Left ventricle myocardium inferior (tissue), 1 donor: ENCODE measurements at regions of chr6 and their contacts with region 1.

Region 1: DNA sequence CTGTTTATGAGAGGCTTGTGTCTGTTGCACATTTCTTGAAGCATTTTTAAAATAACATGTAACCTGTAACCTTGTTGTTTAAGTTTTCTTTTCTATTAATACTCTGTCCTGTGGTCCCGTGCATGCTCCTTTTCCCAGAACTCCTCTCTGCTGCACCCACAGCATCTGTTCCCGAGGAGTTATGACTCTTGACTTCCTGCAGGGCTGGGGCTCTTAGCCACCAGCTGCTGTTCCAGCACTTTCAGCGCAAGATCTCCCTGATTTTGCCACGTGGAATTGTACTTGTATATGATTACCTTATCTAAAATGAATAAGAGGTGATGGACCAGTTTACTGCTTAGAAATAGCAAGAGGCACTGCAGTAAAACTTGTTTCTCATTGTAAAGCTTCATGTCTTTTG is 150.6 kb downstream of the QKI start:
- DNase-seq: no peak
- H3K4me3 ChIP-seq: no peak overlapping the region
- H3K27ac ChIP-seq: peak overlapping the region; percentile 50
- H3K4me1 ChIP-seq: peaks cover 76% of the 10 kb centered on the region
- H3K27me3 ChIP-seq: no peaks in the 10 kb centered on the region
- CTCF ChIP-seq: no peak

Region 2: GRCh38 chr6:163474581-163474980 is 90.6 kb before region 1 on chr6:
- intact Hi-C with region 1: no loop called
- DNase-seq: no peak
- H3K4me3 ChIP-seq: no peak overlapping the region
- H3K27ac ChIP-seq: peak overlapping the region; percentile 6
- H3K4me1 ChIP-seq: peaks cover 90% of the 10 kb centered on the region
- H3K27me3 ChIP-seq: no peaks in the 10 kb centered on the region
- CTCF ChIP-seq: no peak

Region 3: DNA sequence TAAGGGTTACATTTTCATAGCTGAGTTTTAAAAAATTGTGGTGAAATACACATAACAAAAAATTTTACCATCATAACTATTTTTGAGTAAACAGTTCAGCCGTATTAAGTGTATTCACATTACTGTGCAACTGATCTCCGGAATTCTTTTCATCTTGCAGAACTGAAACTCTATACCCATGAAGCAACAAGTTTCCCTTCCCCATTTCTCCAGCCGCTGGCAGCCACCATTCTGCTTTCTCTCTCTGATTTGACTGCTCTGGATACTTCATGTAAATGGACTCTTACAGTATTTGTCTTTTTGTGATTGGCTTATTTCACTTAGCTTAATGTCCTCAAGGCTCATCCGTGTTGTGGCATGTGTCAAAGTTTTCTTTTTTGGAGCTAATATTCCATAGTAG is 190.9 kb after region 1 on chr6:
- intact Hi-C with region 1: no loop called
- DNase-seq: no peak
- H3K4me3 ChIP-seq: no peak overlapping the region
- H3K27ac ChIP-seq: no peak overlapping the region
- H3K4me1 ChIP-seq: peaks cover under 1% of the 10 kb centered on the region
- H3K27me3 ChIP-seq: no peaks in the 10 kb centered on the region
- CTCF ChIP-seq: no peak

Region 4: DNA sequence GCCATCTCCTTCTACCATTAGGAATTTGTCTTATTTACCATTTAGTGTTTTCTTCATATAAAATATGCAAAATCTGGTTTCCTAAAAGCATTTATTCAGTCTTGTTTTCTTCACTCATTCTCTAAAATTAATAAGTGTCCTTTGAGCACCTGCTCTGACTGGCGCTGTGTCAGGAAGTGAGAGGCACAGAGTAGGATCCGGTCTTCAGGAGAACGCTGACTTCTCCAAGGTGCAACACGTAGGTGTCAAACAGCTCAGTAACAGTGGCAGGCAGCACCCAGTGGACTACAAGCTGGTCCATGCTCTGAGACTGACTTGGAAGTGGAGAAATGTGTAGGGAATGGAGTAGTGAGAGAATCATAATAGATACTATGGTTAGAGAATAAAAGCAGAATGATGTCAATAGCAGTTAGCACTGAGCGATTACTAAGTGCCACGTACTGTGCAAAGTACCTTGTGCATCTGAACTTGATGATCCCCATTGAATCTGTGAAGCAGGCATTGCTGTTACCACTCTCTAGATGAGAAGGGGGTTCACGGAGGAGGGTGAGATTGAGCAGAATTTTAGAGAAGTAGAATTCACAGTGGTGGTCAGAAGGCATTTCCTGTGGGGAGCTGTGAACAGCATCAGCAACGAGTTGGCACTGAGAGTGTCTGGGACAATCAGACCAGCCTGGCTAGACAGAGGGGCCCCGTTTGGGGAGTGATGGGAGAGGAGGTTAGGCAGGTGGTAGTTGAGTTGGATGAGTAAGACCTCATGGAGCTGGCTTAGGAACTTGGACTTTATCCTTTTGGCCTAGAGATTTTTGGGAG is 419.2 kb after region 1 on chr6:
- intact Hi-C with region 1: no loop called
- DNase-seq: no peak
- H3K4me3 ChIP-seq: no peak overlapping the region
- H3K27ac ChIP-seq: peak overlapping the region; percentile 13
- H3K4me1 ChIP-seq: peaks cover 16% of the 10 kb centered on the region
- H3K27me3 ChIP-seq: no peaks in the 10 kb centered on the region
- CTCF ChIP-seq: no peak

Region 5: GRCh38 chr6:164106345-164106769 is 541.2 kb after region 1 on chr6:
- intact Hi-C with region 1: loop called (anchors 10 kb)
- DNase-seq: peak; percentile 73
- H3K4me3 ChIP-seq: peak overlapping the region; percentile 52
- H3K27ac ChIP-seq: peak overlapping the region; percentile 96
- H3K4me1 ChIP-seq: peaks cover 60% of the 10 kb centered on the region
- H3K27me3 ChIP-seq: no peaks in the 10 kb centered on the region
- CTCF ChIP-seq: peak; percentile 74